Dorsolateral prefrontal cortex (tissue), 120 donors: ENCODE measurements at regions of chr6 and their contacts with region 1.

Region 1: GRCh38 chr6:147117580-147117979 is 86.6 kb upstream of the STXBP5 start:
- DNase-seq: no peak
- H3K4me3 ChIP-seq: peak overlapping the region in 20 of 59 donors; percentile 4 to 38 (median 10)
- H3K27ac ChIP-seq: peak overlapping the region in 11 of 59 donors; percentile 9 to 45 (median 27)
- H3K27me3 ChIP-seq: no peaks in the 10 kb centered on the region
- CTCF ChIP-seq: no peak

Region 2: GRCh38 chr6:146990821-146991798 is 126.5 kb before region 1 on chr6:
- intact Hi-C with region 1: no loop called
- DNase-seq: no peak
- H3K4me3 ChIP-seq: no peak overlapping the region
- H3K27ac ChIP-seq: no peak overlapping the region
- H3K27me3 ChIP-seq: no peaks in the 10 kb centered on the region
- CTCF ChIP-seq: no peak

Region 3: GRCh38 chr6:147043994-147044477 is 73.5 kb before region 1 on chr6:
- intact Hi-C with region 1: loop called in 1 of 2 experiments (anchors 10 kb)
- DNase-seq: no peak
- H3K4me3 ChIP-seq: no peak overlapping the region
- H3K27ac ChIP-seq: no peak overlapping the region
- H3K27me3 ChIP-seq: no peaks in the 10 kb centered on the region
- CTCF ChIP-seq: no peak